Aorta (tissue), 5 donors: ENCODE measurements at regions of chr5 and their contacts with region 1.

Region 1: DNA sequence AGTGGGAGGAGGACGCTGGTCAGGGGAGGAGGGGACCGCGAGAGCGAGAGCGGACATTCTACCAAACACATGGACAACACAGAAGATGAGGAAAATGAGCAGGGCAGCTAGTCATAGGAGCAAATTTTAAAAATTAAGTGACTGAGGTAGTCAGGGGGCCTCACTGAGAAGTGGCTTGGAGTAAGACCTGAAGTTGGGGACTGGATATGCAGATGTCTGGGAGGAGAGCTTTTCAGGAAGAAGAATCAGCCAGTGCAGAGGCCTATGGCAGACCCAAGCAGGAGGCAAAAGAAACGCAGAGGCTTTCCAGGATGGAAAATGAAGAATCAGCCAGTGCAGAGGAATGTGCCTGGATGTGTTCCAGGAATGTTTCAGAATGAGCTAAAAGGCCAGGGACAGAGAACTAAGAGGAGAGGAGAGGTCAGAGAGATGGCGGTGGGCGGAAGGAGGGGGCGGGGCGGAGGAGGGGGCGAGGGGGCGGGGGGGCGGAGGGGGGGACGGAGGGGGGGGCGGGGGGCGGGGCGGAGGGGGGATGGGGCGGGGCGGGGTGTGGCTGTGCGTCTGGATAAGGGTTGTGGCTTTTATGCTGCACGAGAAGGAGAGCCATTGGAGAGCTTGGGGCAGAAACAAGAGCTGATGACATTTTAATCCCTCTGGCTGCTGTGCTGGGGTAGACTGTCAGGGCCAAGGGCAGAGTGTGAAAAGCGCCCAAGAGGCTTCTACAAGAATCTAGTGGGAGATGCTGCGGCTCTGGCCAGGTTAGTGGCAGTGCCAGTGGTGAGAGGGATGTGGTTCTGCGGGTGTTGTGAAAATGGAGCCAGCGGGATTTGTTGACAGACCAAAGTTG is 129.6 kb downstream of the KCNIP1 start:
- DNase-seq: peak in 1 of 2 donors; percentile 63
- ATAC-seq: peak; percentile 71
- H3K4me3 ChIP-seq: peak overlapping the region in 1 of 2 donors; percentile 18
- H3K27ac ChIP-seq: peak overlapping the region; percentile 81 to 92
- H3K4me1 ChIP-seq: no peaks in the 10 kb centered on the region
- H3K27me3 ChIP-seq: no peaks in the 10 kb centered on the region

Region 2: DNA sequence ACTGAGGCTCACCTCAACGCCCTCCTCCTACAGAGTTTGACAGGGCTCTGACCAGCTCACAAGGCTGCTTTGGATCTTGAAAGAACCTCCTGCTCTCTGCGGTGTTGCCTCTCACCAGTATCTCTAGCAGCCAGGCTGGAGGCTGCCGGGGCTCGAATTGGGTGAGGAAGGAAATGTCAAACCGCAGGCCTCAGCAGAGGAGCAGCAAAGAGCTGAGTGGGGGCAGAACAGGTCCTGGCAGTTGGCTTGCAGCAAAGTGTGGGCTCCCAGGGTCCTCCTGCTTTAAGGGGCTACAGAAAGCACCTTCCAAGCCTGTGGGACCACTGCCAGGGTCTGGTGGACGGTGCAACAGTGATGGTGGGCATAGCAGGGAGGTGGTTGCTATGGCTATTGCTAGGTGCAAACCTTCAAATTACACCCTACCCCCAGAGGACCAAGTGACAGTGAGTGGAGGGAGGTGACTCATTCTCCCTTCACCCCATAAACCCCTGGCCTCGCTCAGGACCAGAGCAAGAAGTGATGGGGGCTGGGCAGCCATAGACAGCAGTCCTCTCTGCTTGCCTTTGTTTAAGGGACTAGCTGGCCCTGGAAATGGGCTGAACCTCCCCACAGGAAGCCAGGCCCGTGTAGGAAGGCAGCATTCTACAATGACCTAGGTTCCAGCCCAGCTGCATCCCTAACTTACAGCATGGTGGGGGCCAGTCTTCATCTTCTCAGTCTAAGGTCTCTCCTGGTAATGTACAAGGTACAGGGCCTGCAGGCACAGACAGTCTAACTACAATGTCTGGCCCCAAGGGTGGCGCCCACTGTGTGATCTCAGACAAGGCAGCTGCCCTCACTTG is 354.6 kb before region 1 on chr5:
- intact Hi-C with region 1: loop called (anchors 5 to 10 kb)
- DNase-seq: peak; percentile 81 to 82
- ATAC-seq: peak; percentile 31
- H3K4me3 ChIP-seq: no peak overlapping the region
- H3K27ac ChIP-seq: no peak overlapping the region
- H3K4me1 ChIP-seq: no peaks in the 10 kb centered on the region
- H3K27me3 ChIP-seq: no peaks in the 10 kb centered on the region

Region 3: DNA sequence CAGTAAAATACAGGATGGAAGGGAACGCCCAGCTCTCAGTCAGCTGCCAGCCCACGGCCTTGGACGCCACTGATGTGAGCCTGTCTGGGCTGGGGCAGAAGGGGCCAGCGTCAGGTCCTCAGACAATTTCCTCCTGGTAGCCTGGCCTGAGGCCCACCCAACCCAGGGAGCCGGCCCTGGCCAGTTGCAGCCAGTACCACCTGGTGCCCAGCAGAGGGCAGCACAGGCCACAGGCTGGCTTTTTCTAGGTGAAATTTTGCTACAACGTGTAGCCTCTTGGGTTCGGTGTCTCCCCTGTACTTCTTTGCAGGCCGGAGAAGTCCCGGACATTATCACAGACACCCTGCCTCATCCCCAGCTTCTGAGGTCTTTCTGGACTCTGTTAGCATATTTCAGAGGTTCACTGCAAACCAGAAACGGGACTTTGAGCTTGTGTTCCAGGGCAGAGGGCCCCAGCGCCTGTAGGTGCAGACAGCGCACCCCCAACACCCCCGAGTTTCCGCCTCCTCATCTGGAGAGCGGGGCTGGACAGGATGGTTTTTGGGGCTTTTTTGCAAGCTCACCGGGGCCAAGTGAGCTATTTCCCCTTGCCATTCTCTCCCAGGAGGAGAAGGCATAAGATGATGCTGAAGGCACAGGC is 198.4 kb before region 1 on chr5:
- intact Hi-C with region 1: loop called (anchors 2 kb)
- DNase-seq: peak; percentile 70 to 89
- ATAC-seq: peak; percentile 89
- H3K4me3 ChIP-seq: no peak overlapping the region
- H3K27ac ChIP-seq: no peak overlapping the region
- H3K4me1 ChIP-seq: no peaks in the 10 kb centered on the region
- H3K27me3 ChIP-seq: no peaks in the 10 kb centered on the region

Region 4: GRCh38 chr5:170491479-170491878 is 142.0 kb before region 1 on chr5:
- intact Hi-C with region 1: loop called in 1 of 2 experiments (anchors 2 kb)
- DNase-seq: no peak
- ATAC-seq: peak; percentile 40
- H3K4me3 ChIP-seq: no peak overlapping the region
- H3K27ac ChIP-seq: peak overlapping the region in 1 of 2 donors; percentile 49
- H3K4me1 ChIP-seq: peaks cover 0 to 3% of the 10 kb centered on the region in 2 donors
- H3K27me3 ChIP-seq: no peaks in the 10 kb centered on the region

Region 5: DNA sequence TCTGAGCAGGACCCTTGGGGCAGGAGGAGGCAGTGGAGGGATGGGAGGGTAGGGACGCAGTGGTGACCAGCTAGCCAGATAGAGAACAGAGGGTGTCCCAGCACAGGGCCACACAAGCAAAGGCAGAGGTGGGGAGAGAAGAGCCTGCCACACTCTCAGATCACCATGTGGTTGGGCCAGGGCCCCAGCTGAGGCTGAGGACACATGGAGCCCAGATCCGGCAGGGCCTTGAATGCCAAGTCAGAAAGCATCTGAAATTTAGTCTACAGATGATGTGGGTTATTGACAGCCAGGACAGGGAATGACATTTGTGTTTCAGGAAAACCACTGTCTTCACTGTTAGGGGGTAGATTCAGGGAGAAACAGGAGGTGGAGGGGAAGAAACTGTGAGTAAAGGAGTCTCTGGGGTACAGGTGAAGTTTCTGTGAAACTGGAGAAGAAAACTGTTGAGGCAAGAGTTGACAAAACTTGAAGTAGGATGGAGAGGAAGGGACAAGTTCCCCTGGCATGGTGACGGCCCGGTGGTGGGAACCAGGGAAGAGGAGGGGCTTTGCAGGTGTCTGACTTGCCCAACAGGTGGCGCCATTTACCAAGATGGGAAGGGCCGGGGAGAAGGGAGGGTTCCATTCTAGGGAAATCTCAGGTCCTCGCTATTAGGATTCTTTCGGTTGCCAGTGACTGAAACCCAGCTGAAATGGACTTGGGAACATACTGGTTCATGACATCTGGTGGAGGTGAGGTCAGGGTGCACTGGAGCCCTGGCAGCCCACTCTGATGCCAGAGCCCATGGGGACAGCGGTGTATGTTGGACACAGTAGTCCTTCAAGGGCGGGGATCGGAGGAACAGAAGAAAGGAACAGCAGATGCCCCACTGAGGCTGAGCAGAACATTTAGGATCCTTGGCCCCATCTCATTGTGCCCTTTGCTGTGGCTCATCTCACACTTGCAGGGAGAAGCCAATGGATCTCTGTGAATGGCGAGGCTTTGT is 29.6 kb before region 1 on chr5:
- intact Hi-C with region 1: loop called in 1 of 2 experiments (anchors 2 kb)
- DNase-seq: peak; percentile 61 to 84
- ATAC-seq: peak; percentile 70
- H3K4me3 ChIP-seq: no peak overlapping the region
- H3K27ac ChIP-seq: no peak overlapping the region
- H3K4me1 ChIP-seq: no peaks in the 10 kb centered on the region
- H3K27me3 ChIP-seq: no peaks in the 10 kb centered on the region

Region 6: GRCh38 chr5:171067540-171068130 is 434.2 kb after region 1 on chr5:
- intact Hi-C with region 1: no loop called
- DNase-seq: no peak
- ATAC-seq: no peak
- H3K4me3 ChIP-seq: no peak overlapping the region
- H3K27ac ChIP-seq: no peak overlapping the region
- H3K4me1 ChIP-seq: no peaks in the 10 kb centered on the region
- H3K27me3 ChIP-seq: no peaks in the 10 kb centered on the region